Activated B cell treated with CpG ODN at 0.5 μM for 24 hours (primary cell): ENCODE measurements at regions of chr19 and their contacts with region 1.

Region 1: DNA sequence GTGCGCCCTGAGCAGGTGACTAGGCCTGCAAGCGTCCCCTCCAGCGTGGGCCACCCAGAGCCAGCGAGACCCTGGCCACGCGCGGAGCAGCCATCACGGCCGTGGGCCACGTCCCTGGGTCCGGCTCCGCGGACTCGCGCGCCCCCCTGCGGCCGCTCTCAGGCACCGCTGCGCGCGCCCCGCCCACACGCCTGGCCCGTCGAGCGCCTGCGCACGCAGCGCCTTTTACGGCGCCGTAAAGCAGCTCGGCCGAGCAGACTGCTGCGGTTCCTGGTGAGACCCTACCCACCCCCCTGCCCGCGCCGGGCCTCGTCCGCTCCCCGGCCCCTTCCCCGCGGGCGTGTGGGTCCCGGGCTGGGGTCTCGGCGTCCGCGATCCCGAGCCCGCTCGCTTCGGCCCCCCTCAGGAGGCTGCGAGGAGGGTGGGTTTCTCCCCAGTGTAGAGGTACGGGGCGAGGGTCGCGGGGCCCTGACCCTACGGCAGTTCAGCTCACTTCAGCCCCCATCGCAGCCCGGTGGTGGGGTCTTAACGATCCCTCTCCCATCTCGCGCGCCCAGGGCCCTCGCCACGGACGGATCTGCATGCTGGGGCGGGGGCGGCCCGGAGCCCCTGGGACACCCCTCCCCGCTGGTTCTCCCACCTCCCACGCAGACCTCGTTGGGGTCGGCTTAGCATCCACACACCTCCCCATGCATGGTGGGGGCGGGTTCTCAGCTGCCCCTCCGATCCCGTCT is at the start of gene TRAPPC5:
- DNase-seq: peak; percentile 91
- ATAC-seq: peak; percentile 53
- H3K4me3 Mint-ChIP-seq: peak within 1 kb of the TSS; percentile 93
- H3K27ac Mint-ChIP-seq: peak within 1 kb of the TSS; percentile 93
- H3K4me1 Mint-ChIP-seq: peaks cover 61% of the 10 kb centered on the region
- H3K27me3 Mint-ChIP-seq: peaks cover 14% of the 10 kb centered on the region
- CTCF ChIP-seq: peak; percentile 78
- total RNA-seq, gene TRAPPC5: 110 and 123 TPM in 2 replicates

Region 2: GRCh38 chr19:7652061-7652641 is 28.6 kb before region 1 on chr19:
- CTCF ChIA-PET with region 1: interaction called, 15 read pairs
- POLR2A ChIA-PET with region 1: interaction called, 10 read pairs
- intact Hi-C with region 1: loop called (anchors 1 kb)
- DNase-seq: peak; percentile 82
- ATAC-seq: peak; percentile 87
- H3K4me3 Mint-ChIP-seq: peak overlapping the region; percentile 78
- H3K27ac Mint-ChIP-seq: peak overlapping the region; percentile 41
- H3K4me1 Mint-ChIP-seq: peaks cover 8% of the 10 kb centered on the region
- H3K27me3 Mint-ChIP-seq: no peaks in the 10 kb centered on the region
- CTCF ChIP-seq: peak; percentile 81

Region 3: DNA sequence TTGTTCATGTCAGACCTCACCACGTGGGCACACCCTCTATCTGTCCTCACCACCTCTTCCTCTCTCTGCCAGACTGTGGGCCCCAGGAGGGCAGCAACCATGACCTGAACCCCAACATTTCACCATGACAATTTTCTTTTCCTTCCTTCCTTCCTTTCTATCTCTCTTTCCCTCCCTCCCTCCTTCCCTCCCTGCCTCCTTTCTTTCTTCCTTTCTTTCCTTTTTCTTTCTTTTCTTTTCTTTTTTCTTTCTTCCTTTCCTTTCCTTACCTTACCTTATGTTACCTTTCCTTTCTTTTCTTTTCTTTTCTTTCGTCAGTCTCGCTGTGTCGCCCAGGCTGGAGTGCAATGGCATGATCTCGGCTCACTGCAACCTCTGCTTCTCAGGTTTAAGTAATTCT is 29.8 kb after region 1 on chr19:
- CTCF ChIA-PET with region 1: interaction called, 10 read pairs
- POLR2A ChIA-PET with region 1: interaction called, 24 read pairs
- intact Hi-C with region 1: loop called (anchors 5 kb)
- DNase-seq: no peak
- ATAC-seq: no peak
- H3K4me3 Mint-ChIP-seq: peak overlapping the region; percentile 30
- H3K27ac Mint-ChIP-seq: peak overlapping the region; percentile 79
- H3K4me1 Mint-ChIP-seq: peaks cover 79% of the 10 kb centered on the region
- H3K27me3 Mint-ChIP-seq: no peaks in the 10 kb centered on the region
- CTCF ChIP-seq: no peak

Region 4: DNA sequence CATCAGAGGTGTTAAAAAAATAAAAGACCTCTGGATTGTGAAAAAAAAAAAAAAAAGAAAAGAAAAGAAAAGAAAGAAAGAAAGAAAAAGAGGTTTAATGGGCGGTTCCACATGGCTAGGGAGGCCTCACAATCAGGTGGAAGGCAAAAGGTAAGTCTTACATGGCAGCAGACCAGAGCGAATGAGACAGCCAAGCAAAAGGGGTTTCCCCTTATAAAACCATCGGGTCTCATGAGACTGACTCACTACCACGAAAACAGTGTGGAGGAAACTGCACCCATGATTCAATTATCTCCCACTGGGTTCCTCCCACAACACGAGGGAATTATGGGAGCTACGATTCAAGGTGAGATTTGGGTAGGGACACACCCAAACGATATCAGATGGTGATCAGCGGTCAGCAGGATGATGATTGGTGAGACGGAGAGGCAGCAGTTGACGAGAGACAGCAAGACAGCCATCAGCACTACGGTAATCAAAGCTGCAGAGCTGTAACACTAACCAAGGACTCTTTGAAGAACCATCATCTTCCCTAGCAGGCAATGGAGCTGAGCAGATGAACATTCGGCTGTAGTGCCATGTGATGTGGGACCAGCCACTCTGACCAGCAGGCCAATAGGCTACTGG is 70.5 kb after region 1 on chr19:
- CTCF ChIA-PET with region 1: interaction called, 8 read pairs
- POLR2A ChIA-PET with region 1: interaction called, 7 read pairs
- intact Hi-C with region 1: loop called (anchors 1 kb)
- DNase-seq: peak; percentile 47
- ATAC-seq: peak; percentile 94
- H3K4me3 Mint-ChIP-seq: peak overlapping the region; percentile 52
- H3K27ac Mint-ChIP-seq: peak overlapping the region; percentile 73
- H3K4me1 Mint-ChIP-seq: peaks cover 54% of the 10 kb centered on the region
- H3K27me3 Mint-ChIP-seq: no peaks in the 10 kb centered on the region
- CTCF ChIP-seq: no peak

Region 5: GRCh38 chr19:7868676-7869452 is 188.1 kb after region 1 on chr19:
- CTCF ChIA-PET with region 1: interaction called, 14 read pairs
- POLR2A ChIA-PET with region 1: no interaction called
- intact Hi-C with region 1: loop called (anchors 1 kb)
- DNase-seq: peak; percentile 83
- ATAC-seq: peak; percentile 75
- H3K4me3 Mint-ChIP-seq: peak overlapping the region; percentile 81
- H3K27ac Mint-ChIP-seq: peak overlapping the region; percentile 73
- H3K4me1 Mint-ChIP-seq: peaks cover 41% of the 10 kb centered on the region
- H3K27me3 Mint-ChIP-seq: peaks cover 30% of the 10 kb centered on the region
- CTCF ChIP-seq: peak; percentile 56

Region 6: DNA sequence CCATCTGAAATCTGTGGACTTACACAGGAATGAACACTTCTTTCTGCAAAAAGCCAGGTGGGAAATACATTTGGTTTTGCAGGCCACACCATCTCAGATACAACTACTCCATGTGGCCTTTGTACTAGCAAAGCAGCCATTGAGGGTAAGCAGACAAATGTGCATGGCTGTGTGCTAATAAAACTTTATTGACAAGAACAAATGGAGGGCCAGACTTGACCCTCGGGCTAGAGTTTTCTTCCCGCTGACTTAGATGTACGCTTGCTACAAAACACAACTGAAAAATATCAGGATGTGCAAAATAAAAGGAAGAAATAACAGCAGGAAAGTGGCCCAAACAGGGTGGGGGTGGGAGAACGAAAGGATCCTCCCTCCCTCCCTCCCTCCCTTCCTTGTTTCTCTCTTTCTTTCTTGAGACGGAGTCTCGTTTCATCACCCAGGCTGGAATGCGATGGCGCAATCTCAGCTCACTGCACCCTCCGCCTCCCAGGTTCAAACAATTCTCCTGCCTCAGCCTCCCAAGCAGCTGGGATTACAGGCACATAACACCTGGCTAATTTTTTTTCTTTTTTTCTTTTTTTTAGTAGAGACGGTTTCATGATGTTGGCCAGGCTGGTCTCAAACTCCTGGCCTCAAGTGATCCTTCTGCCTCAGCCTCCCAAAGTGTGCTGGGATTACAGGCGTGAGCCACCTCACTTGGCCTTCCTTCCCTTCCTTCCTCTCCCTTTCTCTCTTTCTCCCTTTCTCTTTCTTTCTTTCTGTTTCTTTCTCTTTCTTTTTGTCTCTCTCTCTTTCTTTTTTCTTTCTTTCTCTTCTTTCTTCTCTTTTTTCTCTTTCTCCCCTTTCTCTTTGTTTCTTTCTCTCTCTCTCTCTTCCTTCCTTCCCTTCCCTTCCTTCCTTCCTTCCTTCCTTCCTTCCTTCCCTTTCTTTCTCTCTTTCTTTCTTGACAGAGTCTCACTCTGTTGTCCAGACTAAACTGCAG is 401.1 kb after region 1 on chr19:
- CTCF ChIA-PET with region 1: no interaction called
- POLR2A ChIA-PET with region 1: no interaction called
- intact Hi-C with region 1: no loop called
- DNase-seq: no peak
- ATAC-seq: no peak
- H3K4me3 Mint-ChIP-seq: no peak overlapping the region
- H3K27ac Mint-ChIP-seq: no peak overlapping the region
- H3K4me1 Mint-ChIP-seq: no peaks in the 10 kb centered on the region
- H3K27me3 Mint-ChIP-seq: peaks cover 3% of the 10 kb centered on the region
- CTCF ChIP-seq: no peak